ENCODE measurements at regions of chr11 and their contacts with region 1.

Region 1: GRCh38 chr11:66288671-66289547 is at the start of gene YIF1A:
- DNase-seq: peak; percentile 95 to 100 (median 97)
- ATAC-seq: peak; percentile 91
- H3K4me3 ChIP-seq: peak within 1 kb of the TSS; percentile 82
- H3K4me3 Mint-ChIP-seq: peak within 1 kb of the TSS; percentile 87
- H3K27ac ChIP-seq: peak within 1 kb of the TSS; percentile 69 to 80
- H3K27ac Mint-ChIP-seq: peak within 1 kb of the TSS; percentile 79
- H3K4me1 ChIP-seq: peaks cover 50% of the 10 kb centered on the region
- H3K4me1 Mint-ChIP-seq: peaks cover 32% of the 10 kb centered on the region
- H3K27me3 ChIP-seq: peaks cover 18 to 23% of the 10 kb centered on the region in 2 experiments
- H3K27me3 Mint-ChIP-seq: peaks cover 19% of the 10 kb centered on the region
- CTCF ChIP-seq: no peak
- total RNA-seq, gene YIF1A: 17.4 to 21.1 TPM

Region 2: DNA sequence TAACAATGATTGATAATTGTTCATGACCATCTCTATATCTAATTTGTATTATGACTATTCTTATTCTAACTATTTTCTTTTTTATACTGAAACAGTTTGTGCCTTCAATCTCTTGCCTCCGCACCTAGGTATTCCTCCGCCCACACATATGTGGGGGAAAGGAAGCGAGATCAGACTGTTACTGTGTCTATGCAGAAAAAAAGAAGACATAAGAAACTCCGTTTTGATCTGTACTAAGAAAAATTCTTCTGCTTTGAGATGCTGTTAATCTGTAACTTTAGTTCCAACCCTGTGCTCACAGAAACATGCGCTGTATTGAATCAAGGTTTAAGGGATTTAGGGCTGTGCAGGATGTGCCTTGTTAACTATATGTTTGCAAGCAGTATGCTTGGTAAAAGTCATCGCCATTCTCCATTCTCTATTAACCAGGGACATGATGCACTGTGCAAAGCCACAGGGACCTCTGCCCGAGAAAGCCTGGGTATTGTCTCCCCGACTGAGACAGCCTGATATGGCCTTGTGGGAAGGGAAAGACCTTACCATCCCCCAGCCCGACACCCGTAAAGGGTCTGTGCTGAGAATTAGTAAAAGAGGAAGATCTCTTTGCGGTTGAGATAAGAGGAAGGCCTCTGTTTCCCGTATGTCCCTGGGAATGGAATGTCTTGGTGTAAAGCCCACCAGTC is 766.1 kb before region 1 on chr11:
- CTCF ChIA-PET with region 1: no interaction called
- POLR2A ChIA-PET with region 1: no interaction called
- intact Hi-C with region 1: no loop called
- DNase-seq: peak in 5 of 14 experiments; percentile 47 to 69 (median 53)
- ATAC-seq: peak; percentile 45
- H3K4me3 ChIP-seq: peak overlapping the region; percentile 47
- H3K4me3 Mint-ChIP-seq: peak overlapping the region; percentile 84
- H3K27ac ChIP-seq: peak overlapping the region; percentile 60 to 84
- H3K27ac Mint-ChIP-seq: peak overlapping the region; percentile 91
- H3K4me1 ChIP-seq: peaks cover 50% of the 10 kb centered on the region
- H3K4me1 Mint-ChIP-seq: peaks cover 49% of the 10 kb centered on the region
- H3K27me3 ChIP-seq: no peaks in the 10 kb centered on the region
- H3K27me3 Mint-ChIP-seq: no peaks in the 10 kb centered on the region
- CTCF ChIP-seq: no peak

Region 3: GRCh38 chr11:65961232-65961901 is 327.5 kb before region 1 on chr11 and contains the start of gene SART1:
- CTCF ChIA-PET with region 1: no interaction called
- POLR2A ChIA-PET with region 1: no interaction called
- intact Hi-C with region 1: no loop called
- DNase-seq: peak; percentile 89 to 99 (median 94)
- ATAC-seq: peak; percentile 90
- H3K4me3 ChIP-seq: peak within 1 kb of the TSS; percentile 92
- H3K4me3 Mint-ChIP-seq: peak within 1 kb of the TSS; percentile 99
- H3K27ac ChIP-seq: peak within 1 kb of the TSS; percentile 93 to 95
- H3K27ac Mint-ChIP-seq: peak within 1 kb of the TSS; percentile 96
- H3K4me1 ChIP-seq: peaks cover 54% of the 10 kb centered on the region
- H3K4me1 Mint-ChIP-seq: peaks cover 55% of the 10 kb centered on the region
- H3K27me3 ChIP-seq: no peaks in the 10 kb centered on the region
- H3K27me3 Mint-ChIP-seq: no peaks in the 10 kb centered on the region
- CTCF ChIP-seq: no peak
- total RNA-seq, gene SART1: 78.6 to 80.2 TPM

Region 4: GRCh38 chr11:66011239-66011784 is 277.6 kb before region 1 on chr11:
- CTCF ChIA-PET with region 1: no interaction called
- POLR2A ChIA-PET with region 1: no interaction called
- intact Hi-C with region 1: no loop called
- DNase-seq: no peak
- ATAC-seq: no peak
- H3K4me3 ChIP-seq: no peak overlapping the region
- H3K4me3 Mint-ChIP-seq: no peak overlapping the region
- H3K27ac ChIP-seq: no peak overlapping the region
- H3K27ac Mint-ChIP-seq: no peak overlapping the region
- H3K4me1 ChIP-seq: peaks cover 11% of the 10 kb centered on the region
- H3K4me1 Mint-ChIP-seq: no peaks in the 10 kb centered on the region
- H3K27me3 ChIP-seq: peaks cover 23 to 25% of the 10 kb centered on the region in 2 experiments
- H3K27me3 Mint-ChIP-seq: peaks cover 23% of the 10 kb centered on the region
- CTCF ChIP-seq: no peak

Region 5: DNA sequence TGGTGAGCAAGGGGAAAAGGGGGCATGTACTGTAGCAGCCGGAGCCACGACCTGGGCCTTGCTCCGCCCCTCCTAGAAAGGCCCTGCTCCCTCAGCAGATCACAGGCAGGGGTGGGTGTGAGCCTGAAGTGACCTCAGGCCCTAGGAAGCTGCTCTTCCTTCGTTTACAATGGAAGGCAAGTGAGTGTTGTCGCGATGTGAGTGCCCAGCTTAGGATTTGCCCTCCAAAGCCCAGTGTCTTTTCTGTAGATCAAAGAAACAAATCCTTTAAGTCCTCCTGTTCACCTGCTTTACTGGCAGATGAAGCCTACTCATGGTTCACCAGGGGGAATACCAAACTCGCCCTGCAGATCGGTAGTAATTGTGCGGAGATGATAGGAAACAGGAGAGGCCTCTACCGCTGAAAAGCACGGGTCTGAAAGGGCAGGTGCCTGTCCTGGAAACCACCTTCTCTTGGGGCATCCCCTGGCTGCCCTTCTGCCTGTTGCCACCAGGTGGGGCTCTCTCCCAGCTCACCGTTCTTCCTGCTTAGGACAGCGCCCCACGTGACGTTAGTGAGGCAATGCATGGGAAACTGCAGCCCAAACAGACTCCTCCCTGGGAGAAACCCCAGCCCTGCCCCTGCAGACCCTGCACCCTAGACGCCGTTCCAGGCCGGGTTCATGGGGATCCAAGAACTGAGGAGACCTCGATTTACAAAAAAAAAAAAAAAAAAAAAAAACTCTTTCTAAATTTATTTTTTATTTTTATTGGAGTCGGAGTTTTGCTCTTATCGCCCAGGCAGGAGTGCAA is 66.4 kb before region 1 on chr11:
- CTCF ChIA-PET with region 1: interaction called, 23 read pairs
- POLR2A ChIA-PET with region 1: interaction called, 12 read pairs
- intact Hi-C with region 1: no loop called
- DNase-seq: peak; percentile 85 to 99 (median 90)
- ATAC-seq: peak; percentile 98
- H3K4me3 ChIP-seq: no peak overlapping the region
- H3K4me3 Mint-ChIP-seq: no peak overlapping the region
- H3K27ac ChIP-seq: peak overlapping the region; percentile 80 to 94
- H3K27ac Mint-ChIP-seq: peak overlapping the region; percentile 90
- H3K4me1 ChIP-seq: peaks cover 15% of the 10 kb centered on the region
- H3K4me1 Mint-ChIP-seq: peaks cover 7% of the 10 kb centered on the region
- H3K27me3 ChIP-seq: no peaks in the 10 kb centered on the region
- H3K27me3 Mint-ChIP-seq: no peaks in the 10 kb centered on the region
- CTCF ChIP-seq: peak; percentile 100

Region 6: GRCh38 chr11:66268283-66268951 is 20.5 kb before region 1 on chr11 and contains the start of gene RAB1B:
- CTCF ChIA-PET with region 1: interaction called, 7 read pairs
- POLR2A ChIA-PET with region 1: interaction called, 31 read pairs
- intact Hi-C with region 1: loop called in 1 of 2 experiments (anchors 2 kb)
- DNase-seq: peak; percentile 99 to 100 (median 100)
- ATAC-seq: peak; percentile 82
- H3K4me3 ChIP-seq: peak within 1 kb of the TSS; percentile 99
- H3K4me3 Mint-ChIP-seq: peak within 1 kb of the TSS; percentile 96
- H3K27ac ChIP-seq: peak within 1 kb of the TSS; percentile 83 to 87
- H3K27ac Mint-ChIP-seq: peak within 1 kb of the TSS; percentile 100
- H3K4me1 ChIP-seq: peaks cover 58% of the 10 kb centered on the region
- H3K4me1 Mint-ChIP-seq: peaks cover 45% of the 10 kb centered on the region
- H3K27me3 ChIP-seq: no peaks in the 10 kb centered on the region
- H3K27me3 Mint-ChIP-seq: no peaks in the 10 kb centered on the region
- CTCF ChIP-seq: no peak
- total RNA-seq, gene RAB1B: 27.4 to 29.4 TPM

Region 7: DNA sequence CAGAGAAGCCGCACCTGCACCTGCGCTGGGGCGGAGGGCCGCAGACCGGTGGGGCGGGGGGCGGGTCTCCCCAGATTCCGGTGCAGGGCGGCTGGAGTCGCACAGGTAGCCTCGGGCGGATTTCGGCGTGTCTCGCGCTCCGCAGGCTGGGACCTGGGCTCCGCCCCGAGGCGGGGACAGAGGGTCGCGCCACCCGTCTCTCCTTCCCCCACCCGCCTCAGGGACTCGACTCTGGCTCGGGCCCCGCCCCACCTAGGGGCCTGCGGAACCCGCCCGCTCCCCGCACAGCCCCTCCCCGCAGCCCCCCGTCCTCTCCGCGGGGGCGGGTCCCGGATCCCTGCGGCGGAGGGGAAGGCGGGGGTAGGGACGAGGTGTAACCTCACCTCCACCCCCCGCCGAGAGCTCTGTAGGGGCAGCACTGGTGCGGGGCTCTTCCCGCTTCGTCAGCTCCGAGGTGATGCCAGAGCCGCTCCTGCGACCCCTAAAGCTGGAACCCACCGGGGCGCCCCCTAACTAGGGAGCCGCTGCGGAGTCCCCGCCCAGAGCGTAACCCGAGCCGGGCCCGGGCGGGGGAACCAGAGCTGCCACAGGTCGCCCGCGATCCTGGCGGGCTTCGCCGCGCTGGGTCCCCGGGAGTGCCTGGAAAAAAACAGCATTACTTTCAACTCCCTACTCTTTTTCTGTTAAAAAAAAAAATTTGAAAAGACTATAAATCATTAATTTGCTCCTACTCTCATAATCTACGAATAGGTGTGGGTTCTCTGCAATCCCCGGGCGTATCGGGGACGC is 82.9 kb after region 1 on chr11 and contains the start of gene SLC29A2:
- CTCF ChIA-PET with region 1: no interaction called
- POLR2A ChIA-PET with region 1: interaction called, 10 read pairs
- intact Hi-C with region 1: no loop called
- DNase-seq: peak; percentile 50 to 89 (median 75)
- ATAC-seq: peak; percentile 73
- H3K4me3 ChIP-seq: peak within 1 kb of the TSS; percentile 79
- H3K4me3 Mint-ChIP-seq: peak within 1 kb of the TSS; percentile 97
- H3K27ac ChIP-seq: peak within 1 kb of the TSS; percentile 60 to 74
- H3K27ac Mint-ChIP-seq: peak within 1 kb of the TSS; percentile 92
- H3K4me1 ChIP-seq: peaks cover 16% of the 10 kb centered on the region
- H3K4me1 Mint-ChIP-seq: peaks cover 9% of the 10 kb centered on the region
- H3K27me3 ChIP-seq: no peaks in the 10 kb centered on the region
- H3K27me3 Mint-ChIP-seq: no peaks in the 10 kb centered on the region
- CTCF ChIP-seq: no peak
- total RNA-seq, gene SLC29A2: 9.7 TPM

Measured in CD4-positive, alpha-beta T cell (primary cell).